ENCODE measurements at regions of chr1 and their contacts with region 1.

Region 1: GRCh38 chr1:94486990-94487389 is 54.6 kb downstream of the F3 start:
- DNase-seq: no peak
- H3K4me3 ChIP-seq: no peak overlapping the region
- H3K27ac ChIP-seq: no peak overlapping the region
- H3K4me1 ChIP-seq: no peaks in the 10 kb centered on the region
- H3K27me3 ChIP-seq: no peaks in the 10 kb centered on the region
- CTCF ChIP-seq: no peak
- EP300 ChIP-seq: no peak
- POLR2A ChIP-seq: no peak

Region 2: GRCh38 chr1:93938466-93939145 is 548.4 kb before region 1 on chr1:
- in situ Hi-C with region 1: no loop called
- intact Hi-C with region 1: no loop called
- DNase-seq: no peak
- H3K4me3 ChIP-seq: no peak overlapping the region
- H3K27ac ChIP-seq: no peak overlapping the region
- H3K4me1 ChIP-seq: no peaks in the 10 kb centered on the region
- H3K27me3 ChIP-seq: no peaks in the 10 kb centered on the region
- CTCF ChIP-seq: no peak
- EP300 ChIP-seq: no peak
- POLR2A ChIP-seq: no peak

Region 3: GRCh38 chr1:94351485-94351884 is 135.5 kb before region 1 on chr1:
- in situ Hi-C with region 1: no loop called
- intact Hi-C with region 1: no loop called
- DNase-seq: no peak
- H3K4me3 ChIP-seq: no peak overlapping the region
- H3K27ac ChIP-seq: no peak overlapping the region
- H3K4me1 ChIP-seq: no peaks in the 10 kb centered on the region
- H3K27me3 ChIP-seq: no peaks in the 10 kb centered on the region
- CTCF ChIP-seq: no peak
- EP300 ChIP-seq: no peak
- POLR2A ChIP-seq: no peak

Region 4: GRCh38 chr1:94440088-94440487 is 46.9 kb before region 1 on chr1:
- in situ Hi-C with region 1: no loop called
- intact Hi-C with region 1: loop called (anchors 2 kb)
- DNase-seq: no peak
- H3K4me3 ChIP-seq: no peak overlapping the region
- H3K27ac ChIP-seq: no peak overlapping the region
- H3K4me1 ChIP-seq: peaks cover 0 to 28% (median 17%) of the 10 kb centered on the region in 4 donors
- H3K27me3 ChIP-seq: no peaks in the 10 kb centered on the region
- CTCF ChIP-seq: no peak
- EP300 ChIP-seq: no peak
- POLR2A ChIP-seq: no peak

Region 5: GRCh38 chr1:94541175-94542087 is 54.4 kb after region 1 on chr1 and contains the start of gene F3:
- in situ Hi-C with region 1: no loop called
- intact Hi-C with region 1: no loop called
- DNase-seq: peak; percentile 95
- H3K4me3 ChIP-seq: peak within 1 kb of the TSS; percentile 62 to 89 (median 76)
- H3K27ac ChIP-seq: peak within 1 kb of the TSS; percentile 85 to 94 (median 90)
- H3K4me1 ChIP-seq: peaks cover 6 to 17% (median 11%) of the 10 kb centered on the region in 4 donors
- H3K27me3 ChIP-seq: no peaks in the 10 kb centered on the region
- CTCF ChIP-seq: peak in 1 of 5 experiments; percentile 7
- EP300 ChIP-seq: no peak
- POLR2A ChIP-seq: peak; percentile 95
- total RNA-seq, gene F3: 35.9 to 105 (median 59.3) TPM

Measured in transverse colon (tissue), 4 donors.